Activated CD4-positive, alpha-beta T cell treated with anti-CD3 and anti-CD28 coated beads for 36 hours (primary cell): ENCODE measurements at regions of chr5 and their contacts with region 1.

Region 1: DNA sequence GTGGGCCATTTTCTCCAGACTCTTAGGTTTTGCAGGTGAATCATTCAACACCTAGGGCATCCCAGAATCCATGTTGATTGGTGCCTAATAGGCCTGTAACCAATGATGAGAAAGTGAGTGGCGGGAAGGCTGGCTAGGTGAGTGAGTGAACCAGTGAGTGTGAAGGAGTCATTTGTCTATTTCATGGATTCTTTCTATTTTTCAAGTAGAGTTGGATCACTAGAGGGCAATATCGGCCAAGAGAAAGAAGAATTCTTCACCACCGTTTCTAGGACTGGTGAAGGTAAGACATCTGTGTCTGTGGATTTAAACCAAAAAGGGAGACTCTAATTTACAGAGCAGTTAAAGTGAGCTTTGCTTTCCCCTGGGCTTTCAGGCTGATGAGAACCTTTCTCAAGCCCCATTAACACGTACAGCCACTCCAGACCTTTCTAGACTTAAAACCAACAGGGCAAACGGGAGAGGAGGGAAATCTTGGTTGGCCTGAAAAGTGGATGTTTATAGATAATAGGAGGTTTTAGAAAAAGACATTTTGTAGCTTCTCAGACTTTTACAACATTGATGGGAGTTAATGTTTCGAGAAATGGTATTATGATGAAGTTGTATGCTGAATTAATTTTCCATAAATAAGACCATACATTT is 114.3 kb upstream of the IL12B start:
- DNase-seq: no peak
- ATAC-seq: peak; percentile 58
- H3K4me3 Mint-ChIP-seq: no peak overlapping the region
- H3K27ac Mint-ChIP-seq: no peak overlapping the region
- H3K4me1 Mint-ChIP-seq: no peaks in the 10 kb centered on the region
- H3K27me3 Mint-ChIP-seq: peaks cover 15% of the 10 kb centered on the region

Region 2: GRCh38 chr5:159616952-159617351 is 172.4 kb after region 1 on chr5:
- CTCF ChIA-PET with region 1: no interaction called
- POLR2A ChIA-PET with region 1: no interaction called
- intact Hi-C with region 1: loop called in 1 of 2 experiments (anchors 1 kb)
- DNase-seq: no peak
- ATAC-seq: no peak
- H3K4me3 Mint-ChIP-seq: no peak overlapping the region
- H3K27ac Mint-ChIP-seq: no peak overlapping the region
- H3K4me1 Mint-ChIP-seq: no peaks in the 10 kb centered on the region
- H3K27me3 Mint-ChIP-seq: peaks cover 5% of the 10 kb centered on the region

Region 3: DNA sequence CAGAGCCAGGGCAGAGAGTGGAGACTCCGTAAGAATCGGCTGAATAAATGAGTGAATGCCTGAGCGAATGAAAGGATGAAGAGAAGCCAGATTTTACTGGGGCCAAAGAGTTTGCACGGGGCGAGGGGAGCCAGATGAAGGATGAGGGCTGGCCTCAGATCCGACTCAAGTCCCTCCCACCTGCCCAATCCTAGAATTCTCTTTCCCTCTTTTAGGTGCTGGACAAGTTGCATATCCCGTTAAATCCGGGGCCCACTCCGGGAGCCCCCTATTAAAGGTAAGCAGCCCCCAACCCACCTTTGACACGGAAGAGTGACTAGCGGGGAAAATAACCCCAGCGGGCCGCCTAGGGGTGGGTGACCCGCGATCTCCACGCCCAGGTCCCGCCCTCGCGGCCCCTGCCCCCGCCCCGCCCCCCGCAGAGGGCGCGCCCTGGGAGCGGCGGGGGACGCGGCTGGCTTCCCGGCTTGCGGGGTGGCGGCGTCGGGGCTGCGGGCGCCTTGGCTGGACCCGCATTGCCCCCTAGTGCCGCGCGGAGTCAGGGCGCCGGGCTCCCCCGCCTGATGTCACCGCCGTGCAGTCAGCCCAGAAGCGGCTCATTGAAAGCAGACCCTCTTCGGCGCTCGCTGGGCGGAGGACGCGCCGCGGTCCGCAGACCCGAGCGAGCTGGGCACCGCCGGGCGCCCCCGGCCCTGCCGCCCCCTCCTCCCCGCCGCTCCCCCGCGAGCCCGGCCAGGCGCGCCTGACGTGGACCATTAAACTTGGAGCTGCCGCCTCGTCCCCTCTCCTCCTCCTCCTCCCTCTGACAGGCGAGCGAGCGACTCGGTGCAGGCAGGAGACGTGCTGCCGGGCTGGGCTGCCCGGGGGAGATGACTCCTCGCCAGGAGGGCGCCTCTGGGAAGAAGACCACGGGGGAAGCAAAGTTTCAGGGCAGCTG is 471.6 kb after region 1 on chr5 and contains the start of gene ADRA1B:
- CTCF ChIA-PET with region 1: interaction called, 4 read pairs
- POLR2A ChIA-PET with region 1: no interaction called
- intact Hi-C with region 1: loop called (anchors 1 kb)
- DNase-seq: peak; percentile 76
- ATAC-seq: peak; percentile 96
- H3K4me3 Mint-ChIP-seq: peak within 1 kb of the TSS; percentile 5
- H3K27ac Mint-ChIP-seq: no peak within 1 kb of the TSS
- H3K4me1 Mint-ChIP-seq: peaks cover 6% of the 10 kb centered on the region
- H3K27me3 Mint-ChIP-seq: peaks cover 46% of the 10 kb centered on the region
- total RNA-seq, gene ADRA1B: not detected

Region 4: DNA sequence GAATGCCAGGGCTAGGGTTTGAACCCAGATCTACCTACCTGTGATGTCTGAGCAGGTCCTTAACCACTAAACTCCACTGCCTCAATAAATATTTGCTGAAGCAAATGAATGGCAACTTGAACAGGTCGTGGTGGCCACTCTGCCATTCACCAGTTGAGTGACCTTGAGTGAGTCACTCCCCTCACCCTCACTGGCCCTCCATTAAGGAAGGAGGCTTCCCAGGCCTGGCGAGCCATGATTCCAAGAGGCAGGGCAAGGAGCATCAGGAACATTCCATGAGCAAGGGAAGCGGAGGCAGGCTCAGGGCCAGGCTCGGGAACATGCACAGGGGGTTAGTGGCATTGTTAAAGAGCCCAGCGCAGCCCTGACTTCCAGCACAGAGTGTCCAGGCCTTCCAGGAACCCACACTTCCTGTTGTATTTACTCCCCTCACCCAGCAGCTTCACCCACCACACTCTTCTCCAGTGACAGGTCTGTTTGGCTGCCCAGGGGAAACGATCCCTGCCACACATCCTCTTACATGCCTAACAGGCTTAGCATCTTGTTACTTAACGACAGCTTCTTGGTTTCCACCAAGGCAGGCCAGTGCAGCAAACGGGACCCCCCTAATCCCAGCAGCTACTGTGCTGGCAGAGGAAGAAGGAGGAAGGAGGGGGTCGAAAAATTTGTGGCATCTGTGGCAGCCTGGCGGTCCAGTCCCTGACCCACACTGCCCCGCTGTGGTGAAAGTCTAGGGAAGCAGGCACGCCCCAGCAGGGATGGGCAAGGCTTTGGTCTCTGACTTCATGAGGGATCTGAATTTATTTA is 520.7 kb after region 1 on chr5:
- CTCF ChIA-PET with region 1: interaction called, 6 read pairs
- POLR2A ChIA-PET with region 1: no interaction called
- intact Hi-C with region 1: loop called in 1 of 2 experiments (anchors 2 kb)
- DNase-seq: peak; percentile 62
- ATAC-seq: no peak
- H3K4me3 Mint-ChIP-seq: no peak overlapping the region
- H3K27ac Mint-ChIP-seq: no peak overlapping the region
- H3K4me1 Mint-ChIP-seq: no peaks in the 10 kb centered on the region
- H3K27me3 Mint-ChIP-seq: peaks cover 20% of the 10 kb centered on the region

Region 5: GRCh38 chr5:160399402-160400353 is 955.1 kb after region 1 on chr5 and contains the start of gene FAM200C:
- CTCF ChIA-PET with region 1: no interaction called
- POLR2A ChIA-PET with region 1: no interaction called
- intact Hi-C with region 1: loop called in 1 of 2 experiments (anchors 10 kb)
- DNase-seq: peak; percentile 83
- ATAC-seq: peak; percentile 87
- H3K4me3 Mint-ChIP-seq: peak within 1 kb of the TSS; percentile 86
- H3K27ac Mint-ChIP-seq: peak within 1 kb of the TSS; percentile 86
- H3K4me1 Mint-ChIP-seq: peaks cover 19% of the 10 kb centered on the region
- H3K27me3 Mint-ChIP-seq: no peaks in the 10 kb centered on the region
- total RNA-seq, gene FAM200C: 0.91 to 1.3 TPM